Esophagus squamous epithelium (tissue), 5 donors: ENCODE measurements at regions of chr20 and their contacts with region 1.

Region 1: DNA sequence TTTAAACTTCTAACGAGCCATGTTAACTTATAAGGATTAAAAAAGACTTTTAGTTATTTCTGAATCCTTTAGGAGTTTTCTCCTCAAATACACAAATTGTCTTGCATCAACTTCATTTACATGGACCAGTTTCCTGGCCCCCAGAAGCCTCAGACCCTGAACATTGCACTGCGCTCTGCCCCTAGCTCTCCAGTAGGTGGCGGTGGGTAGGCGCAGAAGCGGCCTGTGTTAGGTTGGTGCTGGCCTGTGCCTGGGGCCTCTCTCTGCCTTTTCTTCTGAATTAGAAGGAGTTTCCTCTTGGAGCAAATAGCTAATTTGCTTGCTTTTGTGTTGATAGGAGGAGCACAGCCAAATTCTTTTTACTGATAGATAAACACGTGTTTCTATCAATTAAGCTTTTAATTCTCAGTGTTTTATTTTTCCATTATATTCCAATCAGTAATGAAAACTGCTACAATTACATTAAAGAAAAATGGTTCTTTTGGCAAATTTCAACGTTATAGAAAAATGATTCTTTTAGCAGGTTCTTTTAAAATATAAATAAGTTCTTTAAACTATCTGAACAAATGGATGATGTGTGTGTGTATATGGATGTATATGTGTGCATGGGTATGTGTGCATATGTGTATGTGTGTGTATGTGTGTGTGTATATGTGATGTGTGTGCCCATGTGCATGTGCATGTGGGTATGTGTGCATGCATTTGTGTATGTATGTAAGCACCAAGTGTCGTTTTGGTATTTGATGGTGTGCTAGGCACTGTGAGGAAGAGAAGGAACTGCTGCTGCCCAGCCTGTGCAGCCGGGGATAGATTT is 44.5 kb downstream of the DTD1 start:
- DNase-seq: no peak
- H3K4me3 ChIP-seq: no peak overlapping the region
- H3K27ac ChIP-seq: no peak overlapping the region
- H3K4me1 ChIP-seq: peaks cover 0 to 8% (median 0%) of the 10 kb centered on the region in 3 donors
- H3K27me3 ChIP-seq: no peaks in the 10 kb centered on the region
- CTCF ChIP-seq: peak; percentile 70 to 90 (median 84)
- POLR2A ChIP-seq: no peak

Region 2: GRCh38 chr20:19185090-19185489 is 552.7 kb after region 1 on chr20:
- intact Hi-C with region 1: loop called (anchors 10 kb)
- DNase-seq: no peak
- H3K4me3 ChIP-seq: no peak overlapping the region
- H3K27ac ChIP-seq: no peak overlapping the region
- H3K4me1 ChIP-seq: no peaks in the 10 kb centered on the region
- H3K27me3 ChIP-seq: no peaks in the 10 kb centered on the region
- CTCF ChIP-seq: no peak
- POLR2A ChIP-seq: no peak

Region 3: DNA sequence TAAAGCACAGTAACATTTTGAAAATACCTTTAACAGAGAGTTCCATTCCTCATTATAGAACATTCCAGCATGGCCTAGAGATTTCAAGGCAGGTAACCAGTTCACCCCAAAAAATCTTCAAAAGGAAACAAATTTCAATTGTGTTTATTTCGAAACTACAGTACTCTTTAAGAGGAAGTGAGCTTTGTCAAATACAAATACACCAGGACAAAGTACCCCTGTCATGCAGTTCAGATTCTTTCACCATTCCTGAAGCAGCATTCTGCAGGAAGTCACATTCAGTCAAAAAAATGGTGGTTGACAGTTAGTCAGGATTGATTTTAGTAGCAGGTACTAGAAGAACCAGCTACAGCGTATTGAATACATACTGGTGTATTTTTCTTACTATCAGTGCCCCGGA is 1036.0 kb after region 1 on chr20:
- intact Hi-C with region 1: loop called (anchors 5 kb)
- DNase-seq: no peak
- H3K4me3 ChIP-seq: no peak overlapping the region
- H3K27ac ChIP-seq: no peak overlapping the region
- H3K4me1 ChIP-seq: no peaks in the 10 kb centered on the region
- H3K27me3 ChIP-seq: no peaks in the 10 kb centered on the region
- CTCF ChIP-seq: no peak
- POLR2A ChIP-seq: no peak